ENCODE measurements at regions of chr11 and their contacts with region 1.

Region 1: DNA sequence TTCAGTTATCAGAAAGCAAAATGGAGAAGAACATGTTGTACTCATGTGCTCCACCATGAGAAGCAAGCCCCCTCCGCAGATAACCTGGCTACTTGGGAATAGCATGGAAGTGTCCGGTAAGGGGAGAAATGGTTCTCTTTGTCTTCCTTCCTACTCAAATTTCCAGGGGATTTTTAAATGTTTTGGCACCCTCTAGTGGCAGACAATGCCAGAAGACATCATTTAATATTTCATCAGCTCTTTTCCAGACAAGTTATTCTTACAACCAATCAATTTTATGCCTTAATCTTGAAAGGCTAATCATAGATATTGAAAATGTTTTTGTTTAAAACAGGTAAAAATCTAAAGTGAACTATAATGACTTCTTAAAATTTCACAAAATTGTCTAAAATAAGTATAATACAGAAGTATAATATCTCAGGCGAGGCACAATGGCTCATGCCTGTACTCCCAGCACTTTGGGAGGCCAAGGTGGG is 15.7 kb downstream of the CRTAM start:
- DNase-seq: peak; percentile 74
- H3K4me3 Mint-ChIP-seq: no peak overlapping the region
- H3K27ac Mint-ChIP-seq: no peak overlapping the region
- H3K4me1 Mint-ChIP-seq: peaks cover 47% of the 10 kb centered on the region
- H3K27me3 Mint-ChIP-seq: no peaks in the 10 kb centered on the region

Region 2: GRCh38 chr11:121655537-121656327 is 1198.3 kb before region 1 on chr11:
- CTCF ChIA-PET with region 1: no interaction called
- intact Hi-C with region 1: loop called (anchors 10 kb)
- DNase-seq: peak; percentile 82
- H3K4me3 Mint-ChIP-seq: peak overlapping the region; percentile 74
- H3K27ac Mint-ChIP-seq: peak overlapping the region; percentile 26
- H3K4me1 Mint-ChIP-seq: peaks cover 22% of the 10 kb centered on the region
- H3K27me3 Mint-ChIP-seq: peaks cover 6% of the 10 kb centered on the region

Region 3: GRCh38 chr11:122375687-122376398 is 478.2 kb before region 1 on chr11:
- CTCF ChIA-PET with region 1: no interaction called
- intact Hi-C with region 1: no loop called
- DNase-seq: no peak
- H3K4me3 Mint-ChIP-seq: no peak overlapping the region
- H3K27ac Mint-ChIP-seq: no peak overlapping the region
- H3K4me1 Mint-ChIP-seq: no peaks in the 10 kb centered on the region
- H3K27me3 Mint-ChIP-seq: peaks cover 7% of the 10 kb centered on the region

Region 4: GRCh38 chr11:122616718-122617117 is 237.3 kb before region 1 on chr11:
- CTCF ChIA-PET with region 1: no interaction called
- intact Hi-C with region 1: no loop called
- DNase-seq: no peak
- H3K4me3 Mint-ChIP-seq: no peak overlapping the region
- H3K27ac Mint-ChIP-seq: no peak overlapping the region
- H3K4me1 Mint-ChIP-seq: no peaks in the 10 kb centered on the region
- H3K27me3 Mint-ChIP-seq: no peaks in the 10 kb centered on the region

Region 5: DNA sequence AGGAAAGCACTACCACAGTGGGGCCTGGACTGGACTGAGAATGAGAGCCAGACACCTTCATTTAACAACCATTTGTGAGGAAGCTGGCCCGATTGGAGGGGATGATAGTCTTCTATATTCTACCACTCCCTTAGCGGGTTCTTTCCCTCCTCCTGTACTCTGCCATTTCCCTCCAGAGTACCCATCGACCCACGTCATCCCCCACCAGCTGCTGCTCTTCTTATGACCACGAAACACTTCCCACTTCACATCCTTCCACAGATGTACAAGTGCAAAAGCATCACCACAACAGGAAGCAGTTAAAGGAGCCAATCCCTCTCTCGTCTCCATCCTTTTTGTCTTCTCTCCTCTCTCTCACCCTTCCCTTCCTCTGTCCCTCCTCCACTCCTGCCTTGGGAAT is 216.5 kb before region 1 on chr11:
- CTCF ChIA-PET with region 1: interaction called, 10 read pairs
- intact Hi-C with region 1: loop called (anchors 1 kb)
- DNase-seq: peak; percentile 45
- H3K4me3 Mint-ChIP-seq: no peak overlapping the region
- H3K27ac Mint-ChIP-seq: no peak overlapping the region
- H3K4me1 Mint-ChIP-seq: peaks cover 9% of the 10 kb centered on the region
- H3K27me3 Mint-ChIP-seq: no peaks in the 10 kb centered on the region

Region 6: DNA sequence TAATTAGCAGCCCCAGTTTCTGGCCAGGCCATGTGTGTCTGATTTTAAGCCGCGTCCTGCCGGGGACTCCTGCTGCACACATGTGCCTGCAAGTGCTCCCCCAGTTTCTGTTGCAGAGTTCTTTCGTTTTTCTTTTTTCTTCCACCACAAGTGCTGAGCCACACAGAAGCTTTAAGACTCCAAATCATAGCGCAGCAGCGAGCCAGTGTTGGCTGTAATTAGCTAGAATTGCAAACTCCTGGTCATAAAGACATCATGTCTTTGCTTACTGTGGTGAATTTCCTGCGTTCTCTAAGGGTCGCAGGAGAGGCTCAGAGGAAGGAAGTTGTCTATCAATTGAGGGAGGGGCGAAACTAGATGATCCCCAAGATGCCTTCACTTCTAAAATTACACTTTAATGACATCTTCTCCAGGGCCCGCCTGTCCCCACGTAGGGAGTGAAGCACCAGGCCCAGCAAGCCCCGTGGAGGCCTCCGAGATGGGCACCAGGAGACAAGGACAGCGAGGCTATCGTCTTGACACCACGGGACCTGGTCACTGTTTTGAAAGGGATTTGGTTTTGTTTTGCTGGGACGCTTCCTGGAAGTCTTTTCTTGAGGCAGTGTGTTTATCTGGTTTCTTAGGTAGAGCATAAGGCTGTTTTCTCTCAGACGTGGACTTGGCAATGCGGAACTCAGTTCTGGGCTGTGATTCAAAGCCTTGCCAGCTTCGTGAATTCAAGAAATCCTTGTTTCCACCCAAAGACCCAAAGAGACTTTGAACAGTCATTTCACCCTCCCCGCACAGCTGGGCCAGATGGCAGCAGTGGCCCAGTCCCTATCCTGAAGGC is 126.7 kb before region 1 on chr11:
- CTCF ChIA-PET with region 1: no interaction called
- intact Hi-C with region 1: no loop called
- DNase-seq: peak; percentile 57
- H3K4me3 Mint-ChIP-seq: peak overlapping the region; percentile 66
- H3K27ac Mint-ChIP-seq: peak overlapping the region; percentile 63
- H3K4me1 Mint-ChIP-seq: peaks cover 62% of the 10 kb centered on the region
- H3K27me3 Mint-ChIP-seq: no peaks in the 10 kb centered on the region

Region 7: GRCh38 chr11:122754553-122755322 is 99.3 kb before region 1 on chr11:
- CTCF ChIA-PET with region 1: interaction called, 10 read pairs
- intact Hi-C with region 1: no loop called
- DNase-seq: peak; percentile 49
- H3K4me3 Mint-ChIP-seq: no peak overlapping the region
- H3K27ac Mint-ChIP-seq: no peak overlapping the region
- H3K4me1 Mint-ChIP-seq: peaks cover 44% of the 10 kb centered on the region
- H3K27me3 Mint-ChIP-seq: peaks cover 2% of the 10 kb centered on the region

Region 8: GRCh38 chr11:122808478-122808869 is 45.5 kb before region 1 on chr11:
- CTCF ChIA-PET with region 1: interaction called, 63 read pairs
- intact Hi-C with region 1: no loop called
- DNase-seq: peak; percentile 18
- H3K4me3 Mint-ChIP-seq: no peak overlapping the region
- H3K27ac Mint-ChIP-seq: peak overlapping the region; percentile 47
- H3K4me1 Mint-ChIP-seq: peaks cover 34% of the 10 kb centered on the region
- H3K27me3 Mint-ChIP-seq: no peaks in the 10 kb centered on the region

Region 9: DNA sequence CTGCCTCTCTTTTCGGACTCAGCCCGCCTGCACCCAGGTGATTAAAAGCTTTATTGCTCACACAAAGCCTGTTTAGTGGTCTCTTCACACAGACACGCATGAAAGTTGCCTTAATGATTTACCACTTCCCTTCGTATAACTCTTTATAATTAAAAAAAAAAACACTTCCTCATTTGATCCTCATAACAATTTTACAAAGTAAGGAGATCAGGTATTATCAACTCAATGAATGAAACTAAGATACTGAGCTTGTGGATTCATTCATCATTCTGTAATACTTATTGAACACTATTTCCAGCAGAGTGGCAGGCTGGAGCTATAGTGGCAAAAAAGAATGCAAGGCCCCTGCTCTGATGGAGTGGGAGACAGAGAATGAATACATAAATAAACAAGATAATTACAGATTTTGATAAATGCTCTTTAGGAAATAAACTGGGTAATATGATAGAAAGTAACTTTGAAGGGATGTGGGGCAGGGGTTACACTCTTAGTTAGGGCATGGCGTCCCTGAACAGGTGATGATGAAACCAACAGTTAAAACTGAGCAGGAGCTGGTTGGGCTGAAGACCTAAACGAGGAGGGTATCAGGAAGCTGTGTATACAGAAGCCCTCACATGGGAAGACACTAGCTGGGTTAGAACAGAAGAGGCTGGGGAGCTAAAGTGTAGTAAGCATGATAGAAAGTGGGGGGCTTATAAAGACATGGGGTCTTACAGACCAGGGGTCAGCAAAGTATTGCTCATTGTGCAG is 21.1 kb before region 1 on chr11:
- CTCF ChIA-PET with region 1: interaction called, 20 read pairs
- intact Hi-C with region 1: no loop called
- DNase-seq: no peak
- H3K4me3 Mint-ChIP-seq: no peak overlapping the region
- H3K27ac Mint-ChIP-seq: no peak overlapping the region
- H3K4me1 Mint-ChIP-seq: peaks cover 9% of the 10 kb centered on the region
- H3K27me3 Mint-ChIP-seq: no peaks in the 10 kb centered on the region